ENCODE measurements at regions of chr17 and their contacts with region 1.

Region 1: DNA sequence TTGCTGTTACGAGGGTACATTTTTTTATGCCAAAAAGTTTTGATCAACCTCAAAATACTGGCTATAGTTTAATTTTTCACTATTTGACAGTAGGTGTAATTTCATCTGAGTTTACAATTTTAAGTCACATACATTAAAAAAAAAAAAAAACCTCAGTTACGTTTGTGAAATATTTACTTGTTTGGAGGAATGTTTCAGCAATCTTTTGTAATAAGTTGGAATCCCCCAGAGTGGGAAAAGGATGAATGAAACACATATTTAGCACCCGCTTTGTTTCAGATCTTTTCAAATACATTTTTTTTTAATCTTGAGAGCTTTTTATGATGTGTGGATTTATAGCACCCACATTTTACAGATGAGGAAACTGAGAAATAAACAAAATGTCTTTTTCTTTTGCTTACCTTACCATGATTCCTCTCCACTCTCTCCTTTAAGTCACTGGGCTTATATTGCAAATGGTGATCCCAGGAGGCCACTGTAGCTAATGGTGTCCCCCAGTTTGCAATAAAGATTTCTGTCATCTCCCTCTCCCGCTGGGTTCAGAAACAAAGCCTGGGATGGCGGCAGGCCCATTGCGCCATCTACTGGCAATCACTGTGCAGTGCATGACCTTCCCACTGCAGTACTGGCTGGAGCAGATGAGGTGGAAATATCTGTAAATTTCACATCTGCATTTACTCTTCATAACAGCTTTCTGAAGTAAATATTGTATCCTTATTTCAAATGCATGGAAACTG is 27.7 kb downstream of the TBC1D3B start:
- H3K4me3 Mint-ChIP-seq: no peak overlapping the region
- H3K27ac Mint-ChIP-seq: peak overlapping the region; percentile 70
- H3K4me1 Mint-ChIP-seq: peaks cover 19% of the 10 kb centered on the region
- H3K27me3 Mint-ChIP-seq: peaks cover 2% of the 10 kb centered on the region

Region 2: DNA sequence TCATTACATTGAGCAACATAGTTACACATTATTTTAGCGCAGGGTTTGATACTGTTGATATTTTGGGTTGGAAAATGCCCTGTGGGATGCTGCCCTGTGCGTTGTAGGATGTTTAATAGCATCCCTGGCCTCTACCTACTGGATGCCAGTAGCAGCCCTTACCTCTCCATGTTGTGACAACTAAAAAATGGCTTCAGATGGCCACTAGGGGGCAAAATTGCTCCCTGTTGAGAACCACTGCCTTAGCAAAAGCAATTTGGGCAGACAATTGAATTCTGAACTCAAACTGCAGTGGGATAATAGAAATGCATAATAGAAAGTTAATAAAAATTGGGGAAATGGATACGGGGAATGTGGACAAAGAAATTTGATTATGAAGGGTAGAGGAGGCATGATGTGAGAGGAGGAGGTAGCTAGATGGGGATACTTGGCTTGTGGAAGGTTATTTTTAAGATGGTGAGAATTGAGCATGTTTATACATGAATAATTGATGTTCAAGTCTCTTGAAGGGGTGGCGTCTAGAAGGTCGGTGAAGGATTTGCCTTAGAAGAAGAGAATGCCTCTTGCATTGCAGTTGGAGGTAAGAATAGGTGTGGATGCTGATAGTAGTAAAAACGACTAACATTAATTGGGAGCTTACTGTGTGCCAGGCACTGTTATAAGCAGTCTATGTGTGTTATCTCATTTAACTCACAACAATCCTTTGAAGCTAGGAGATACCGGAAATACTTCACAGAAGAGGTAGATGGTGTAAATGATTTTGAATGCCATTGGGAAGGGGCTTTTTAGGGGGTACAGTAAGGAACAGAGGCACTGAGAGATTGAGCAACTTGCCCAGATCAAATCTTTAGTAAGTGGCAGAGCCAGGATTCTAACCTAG is 299.0 kb before region 1 on chr17:
- intact Hi-C with region 1: loop called (anchors 10 kb)
- H3K4me3 Mint-ChIP-seq: no peak overlapping the region
- H3K27ac Mint-ChIP-seq: no peak overlapping the region
- H3K4me1 Mint-ChIP-seq: peaks cover 5% of the 10 kb centered on the region
- H3K27me3 Mint-ChIP-seq: no peaks in the 10 kb centered on the region

Region 3: DNA sequence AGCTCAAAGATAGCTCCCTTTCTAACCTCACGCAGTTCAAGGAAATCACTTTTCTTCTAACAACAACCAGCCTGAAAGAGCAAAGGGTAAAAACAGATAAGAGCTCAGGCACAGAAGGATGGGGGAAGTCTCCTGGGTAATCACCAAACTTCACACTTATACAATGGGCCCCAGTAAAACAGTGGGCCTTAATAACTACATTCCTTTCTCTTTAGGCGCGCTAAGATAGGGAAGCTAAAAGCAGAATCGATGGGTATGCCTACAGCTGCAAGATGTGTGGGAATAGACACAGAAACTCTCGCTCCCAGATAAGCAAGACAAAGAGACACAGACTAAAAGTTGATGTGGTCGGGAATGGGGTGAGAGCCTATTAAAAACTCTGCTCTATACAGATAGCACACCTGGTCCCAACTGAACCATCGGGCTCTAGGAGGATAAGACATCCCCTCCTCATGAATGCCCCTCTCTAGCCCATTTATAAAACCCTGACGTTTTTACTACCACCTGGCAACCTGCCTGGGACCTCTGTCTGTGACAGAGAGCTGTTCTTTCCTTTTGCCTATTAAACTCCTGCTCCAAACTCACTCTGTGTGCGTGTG is 206.0 kb before region 1 on chr17:
- intact Hi-C with region 1: no loop called
- H3K4me3 Mint-ChIP-seq: no peak overlapping the region
- H3K27ac Mint-ChIP-seq: no peak overlapping the region
- H3K4me1 Mint-ChIP-seq: no peaks in the 10 kb centered on the region
- H3K27me3 Mint-ChIP-seq: no peaks in the 10 kb centered on the region

Region 4: GRCh38 chr17:36089888-36090836 is 58.6 kb before region 1 on chr17 and contains the start of gene CCL3:
- intact Hi-C with region 1: no loop called
- H3K4me3 Mint-ChIP-seq: peak within 1 kb of the TSS; percentile 71
- H3K27ac Mint-ChIP-seq: peak within 1 kb of the TSS; percentile 92
- H3K4me1 Mint-ChIP-seq: peaks cover 45% of the 10 kb centered on the region
- H3K27me3 Mint-ChIP-seq: no peaks in the 10 kb centered on the region

Measured in dendritic cell treated with granulocyte-macrophage colony-stimulating factor and Interleukin-4, amounts not matched to agents 40 ng/mL and 50 ng/mL, for 4 days (primary cell).